ENCODE measurements at regions of chr19 and their contacts with region 1.

Region 1: GRCh38 chr19:47210689-47211316 is 20.2 kb downstream of the BBC3 start:
- DNase-seq: peak; percentile 58 to 87 (median 83)
- ATAC-seq: peak; percentile 98
- H3K4me3 ChIP-seq: no peak overlapping the region
- H3K4me3 Mint-ChIP-seq: no peak overlapping the region
- H3K27ac ChIP-seq: peak overlapping the region in 1 of 2 experiments; percentile 39
- H3K27ac Mint-ChIP-seq: peak overlapping the region; percentile 80
- H3K4me1 ChIP-seq: peaks cover 8% of the 10 kb centered on the region
- H3K4me1 Mint-ChIP-seq: peaks cover 8% of the 10 kb centered on the region
- H3K27me3 ChIP-seq: no peaks in the 10 kb centered on the region
- H3K27me3 Mint-ChIP-seq: no peaks in the 10 kb centered on the region
- CTCF ChIP-seq: peak; percentile 89

Region 2: GRCh38 chr19:47143322-47144073 is 67.3 kb before region 1 on chr19:
- CTCF ChIA-PET with region 1: interaction called, 93 read pairs
- POLR2A ChIA-PET with region 1: interaction called, 7 read pairs
- intact Hi-C with region 1: no loop called
- DNase-seq: no peak
- ATAC-seq: no peak
- H3K4me3 ChIP-seq: no peak overlapping the region
- H3K4me3 Mint-ChIP-seq: no peak overlapping the region
- H3K27ac ChIP-seq: no peak overlapping the region
- H3K27ac Mint-ChIP-seq: no peak overlapping the region
- H3K4me1 ChIP-seq: peaks cover 35% of the 10 kb centered on the region
- H3K4me1 Mint-ChIP-seq: peaks cover 56% of the 10 kb centered on the region
- H3K27me3 ChIP-seq: no peaks in the 10 kb centered on the region
- H3K27me3 Mint-ChIP-seq: no peaks in the 10 kb centered on the region
- CTCF ChIP-seq: no peak

Region 3: DNA sequence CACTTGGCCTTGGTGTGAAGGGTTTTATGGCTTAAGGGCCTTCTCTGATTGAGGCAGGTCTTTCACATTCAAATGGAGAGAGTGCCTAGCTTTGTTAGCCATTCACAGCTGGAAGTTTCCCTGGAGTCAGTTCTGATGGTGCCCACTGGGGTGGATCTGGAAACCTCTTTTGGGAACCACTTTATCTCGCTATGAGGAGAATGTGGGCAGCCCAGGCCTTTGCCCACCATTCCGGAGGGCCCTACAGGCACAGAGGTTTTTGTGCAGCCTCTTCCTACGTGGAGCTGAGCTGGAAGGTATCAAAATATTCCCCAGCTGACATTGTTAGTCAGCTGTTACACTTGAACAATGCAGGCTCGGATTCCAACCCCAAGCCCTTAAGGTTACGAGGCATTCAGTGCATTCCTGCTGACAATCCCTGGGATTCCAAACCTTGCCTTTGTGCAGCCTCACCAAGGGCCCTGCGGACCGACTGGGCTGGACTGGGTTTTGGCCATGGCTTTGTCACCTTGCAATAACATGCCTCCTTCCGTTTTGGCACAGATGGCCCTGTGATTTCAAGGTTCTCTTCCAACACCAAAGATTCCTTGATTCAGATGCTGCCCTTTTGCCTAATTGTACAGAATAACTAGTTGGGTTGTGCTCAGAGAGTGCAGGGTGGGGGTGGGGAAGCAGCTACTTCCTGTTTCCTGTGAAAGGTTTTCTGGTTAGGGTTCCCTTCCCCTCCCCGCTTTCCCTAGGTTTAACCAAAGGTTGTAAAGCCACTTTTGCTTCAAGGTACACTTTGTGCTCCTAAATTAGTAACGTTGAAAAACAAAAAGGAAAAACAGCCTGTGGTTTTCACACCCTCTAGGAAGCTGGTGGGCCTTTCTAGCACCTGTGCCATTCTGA is 53.1 kb before region 1 on chr19:
- CTCF ChIA-PET with region 1: interaction called, 77 read pairs
- POLR2A ChIA-PET with region 1: interaction called, 16 read pairs
- intact Hi-C with region 1: no loop called
- DNase-seq: peak in 6 of 9 experiments; percentile 37 to 80 (median 64)
- ATAC-seq: peak; percentile 22
- H3K4me3 ChIP-seq: peak overlapping the region; percentile 14 to 42
- H3K4me3 Mint-ChIP-seq: peak overlapping the region; percentile 74
- H3K27ac ChIP-seq: peak overlapping the region; percentile 41 to 48
- H3K27ac Mint-ChIP-seq: peak overlapping the region; percentile 95
- H3K4me1 ChIP-seq: peaks cover 61% of the 10 kb centered on the region
- H3K4me1 Mint-ChIP-seq: peaks cover 73% of the 10 kb centered on the region
- H3K27me3 ChIP-seq: no peaks in the 10 kb centered on the region
- H3K27me3 Mint-ChIP-seq: no peaks in the 10 kb centered on the region
- CTCF ChIP-seq: no peak

Region 4: DNA sequence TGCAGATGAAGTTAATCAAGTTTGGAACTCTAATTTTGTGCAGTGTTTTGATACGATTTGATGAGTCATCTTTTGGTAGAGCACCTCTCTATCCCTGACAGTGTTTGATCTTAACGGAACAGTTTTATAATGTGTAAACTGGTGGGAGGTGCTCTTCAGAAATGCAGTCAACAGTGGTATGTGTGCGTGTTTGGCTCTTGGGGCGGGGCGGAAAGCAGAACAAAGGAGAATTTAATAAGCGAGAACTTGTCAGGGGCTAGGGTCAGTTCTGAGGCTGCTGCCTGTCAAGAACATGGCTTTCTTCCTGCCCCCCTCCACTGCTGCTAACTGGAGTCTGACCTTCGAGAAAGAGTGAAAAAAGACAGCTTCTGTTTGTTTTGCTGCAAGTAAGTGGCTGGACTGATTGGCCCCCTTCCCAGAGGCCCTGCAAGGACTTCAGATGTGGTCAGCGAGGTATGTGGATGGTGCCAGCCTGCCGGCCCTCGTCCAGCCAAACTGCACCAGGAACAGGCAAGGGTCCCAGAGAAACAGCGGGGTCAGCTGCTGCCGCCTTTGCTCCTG is 20.6 kb before region 1 on chr19:
- CTCF ChIA-PET with region 1: interaction called, 47 read pairs
- POLR2A ChIA-PET with region 1: interaction called, 15 read pairs
- intact Hi-C with region 1: loop called in 1 of 2 experiments (anchors 2 kb)
- DNase-seq: peak in 8 of 9 experiments; percentile 18 to 80 (median 59)
- ATAC-seq: peak; percentile 39
- H3K4me3 ChIP-seq: no peak overlapping the region
- H3K4me3 Mint-ChIP-seq: peak overlapping the region; percentile 38
- H3K27ac ChIP-seq: peak overlapping the region in 1 of 2 experiments; percentile 9
- H3K27ac Mint-ChIP-seq: peak overlapping the region; percentile 94
- H3K4me1 ChIP-seq: peaks cover 70% of the 10 kb centered on the region
- H3K4me1 Mint-ChIP-seq: peaks cover 65% of the 10 kb centered on the region
- H3K27me3 ChIP-seq: no peaks in the 10 kb centered on the region
- H3K27me3 Mint-ChIP-seq: no peaks in the 10 kb centered on the region
- CTCF ChIP-seq: no peak

Region 5: GRCh38 chr19:47225746-47226425 is 15.1 kb after region 1 on chr19:
- CTCF ChIA-PET with region 1: interaction called, 83 read pairs
- POLR2A ChIA-PET with region 1: interaction called, 19 read pairs
- intact Hi-C with region 1: loop called (anchors 1 kb)
- DNase-seq: peak; percentile 80 to 95 (median 86)
- ATAC-seq: peak; percentile 47
- H3K4me3 ChIP-seq: peak overlapping the region; percentile 48 to 68
- H3K4me3 Mint-ChIP-seq: peak overlapping the region; percentile 81
- H3K27ac ChIP-seq: peak overlapping the region; percentile 73 to 89
- H3K27ac Mint-ChIP-seq: peak overlapping the region; percentile 92
- H3K4me1 ChIP-seq: peaks cover 40% of the 10 kb centered on the region
- H3K4me1 Mint-ChIP-seq: peaks cover 16% of the 10 kb centered on the region
- H3K27me3 ChIP-seq: no peaks in the 10 kb centered on the region
- H3K27me3 Mint-ChIP-seq: no peaks in the 10 kb centered on the region
- CTCF ChIP-seq: peak; percentile 51